ENCODE measurements at regions of chr16 and their contacts with region 1.

Region 1: DNA sequence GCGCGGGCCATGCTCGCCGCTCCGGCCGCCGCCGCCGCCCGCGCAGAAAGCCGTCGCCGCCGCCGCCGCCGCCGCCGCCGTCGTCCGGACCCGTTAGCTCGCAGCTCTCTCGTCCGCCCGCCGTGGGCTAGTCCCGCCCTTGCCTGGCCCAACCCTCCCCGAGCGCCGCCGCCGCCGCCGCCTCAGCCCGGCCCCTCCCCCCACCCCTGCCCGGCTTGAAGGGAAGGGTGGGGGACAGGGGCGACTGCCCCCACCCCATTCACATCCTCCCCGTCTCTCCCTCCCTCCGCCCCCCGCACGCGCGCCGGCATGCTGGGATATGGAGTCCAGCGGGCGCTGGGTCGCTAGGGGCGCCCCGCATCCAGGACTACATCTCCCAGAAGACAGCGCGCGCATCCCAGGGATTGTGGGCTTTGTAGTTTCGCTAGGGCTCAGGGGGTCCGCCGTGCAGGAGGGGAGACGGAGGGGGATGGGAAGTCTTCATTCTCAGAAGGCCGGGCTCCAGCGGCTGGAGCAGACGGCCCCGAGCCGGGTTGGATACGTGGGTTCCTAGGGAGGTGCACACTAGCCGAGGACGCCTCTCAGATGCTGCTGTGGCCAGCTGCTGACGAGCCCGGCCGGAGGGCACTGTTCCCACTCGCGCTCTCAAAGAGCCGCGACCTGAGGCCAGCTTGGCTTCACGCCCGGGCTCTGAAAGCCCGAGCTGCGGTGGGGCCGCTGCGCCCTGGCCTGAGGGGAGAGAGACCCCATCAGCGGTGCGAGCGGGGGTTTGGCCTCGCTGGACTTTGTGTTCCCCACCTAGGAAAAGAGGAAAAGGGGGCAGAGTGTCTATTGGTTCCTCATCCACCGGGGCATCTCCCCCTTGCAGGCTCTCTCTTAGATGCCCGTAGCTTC is at the start of gene ST3GAL2:
- DNase-seq: peak; percentile 86 to 96 (median 94)
- H3K4me3 ChIP-seq: peak within 1 kb of the TSS; percentile 11 to 84 (median 55)
- H3K27ac ChIP-seq: peak within 1 kb of the TSS in 3 of 5 donors; percentile 32 to 88 (median 71)
- H3K4me1 ChIP-seq: peaks cover 0 to 23% of the 10 kb centered on the region in 2 donors
- H3K27me3 ChIP-seq: no peaks in the 10 kb centered on the region
- CTCF ChIP-seq: peak in 3 of 6 experiments; percentile 12 to 17 (median 15)
- POLR2A ChIP-seq: no peak
- total RNA-seq, gene ST3GAL2: 14.0 to 30.8 (median 27.4) TPM

Region 2: DNA sequence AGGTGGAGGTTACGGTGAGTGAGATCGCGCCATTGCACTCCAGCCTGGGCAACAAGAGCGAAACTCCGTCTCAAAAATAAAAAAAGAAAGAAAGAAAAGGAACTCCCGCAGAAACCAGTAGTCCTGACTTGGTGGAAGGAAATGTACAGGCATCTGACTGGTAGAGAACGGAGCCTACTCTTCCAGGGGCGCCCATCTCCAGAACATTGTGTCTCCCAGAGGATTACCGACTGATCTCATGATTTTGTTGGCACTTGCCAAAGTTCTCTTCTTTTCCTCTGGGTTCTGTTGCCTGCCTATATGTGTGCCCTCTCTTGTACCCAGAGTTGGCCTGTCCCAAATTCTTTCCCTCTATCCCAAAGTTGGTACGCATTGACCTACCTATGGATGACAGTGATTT is 68.3 kb before region 1 on chr16:
- intact Hi-C with region 1: no loop called
- DNase-seq: no peak
- H3K4me3 ChIP-seq: no peak overlapping the region
- H3K27ac ChIP-seq: no peak overlapping the region
- H3K4me1 ChIP-seq: no peaks in the 10 kb centered on the region
- H3K27me3 ChIP-seq: no peaks in the 10 kb centered on the region
- CTCF ChIP-seq: no peak
- POLR2A ChIP-seq: no peak

Region 3: GRCh38 chr16:70380861-70381603 is 58.2 kb before region 1 on chr16:
- intact Hi-C with region 1: loop called in 1 of 2 experiments (anchors 5 kb)
- DNase-seq: peak; percentile 95 to 99 (median 98)
- H3K4me3 ChIP-seq: peak overlapping the region in 3 of 4 donors; percentile 31 to 71 (median 58)
- H3K27ac ChIP-seq: peak overlapping the region in 4 of 5 donors; percentile 39 to 84 (median 64)
- H3K4me1 ChIP-seq: peaks cover 8 to 18% of the 10 kb centered on the region in 2 donors
- H3K27me3 ChIP-seq: no peaks in the 10 kb centered on the region
- CTCF ChIP-seq: peak in 2 of 6 experiments; percentile 17 to 28
- POLR2A ChIP-seq: peak in 1 of 2 donors; percentile 78